ENCODE measurements at regions of chr19 and their contacts with region 1.

Region 1: DNA sequence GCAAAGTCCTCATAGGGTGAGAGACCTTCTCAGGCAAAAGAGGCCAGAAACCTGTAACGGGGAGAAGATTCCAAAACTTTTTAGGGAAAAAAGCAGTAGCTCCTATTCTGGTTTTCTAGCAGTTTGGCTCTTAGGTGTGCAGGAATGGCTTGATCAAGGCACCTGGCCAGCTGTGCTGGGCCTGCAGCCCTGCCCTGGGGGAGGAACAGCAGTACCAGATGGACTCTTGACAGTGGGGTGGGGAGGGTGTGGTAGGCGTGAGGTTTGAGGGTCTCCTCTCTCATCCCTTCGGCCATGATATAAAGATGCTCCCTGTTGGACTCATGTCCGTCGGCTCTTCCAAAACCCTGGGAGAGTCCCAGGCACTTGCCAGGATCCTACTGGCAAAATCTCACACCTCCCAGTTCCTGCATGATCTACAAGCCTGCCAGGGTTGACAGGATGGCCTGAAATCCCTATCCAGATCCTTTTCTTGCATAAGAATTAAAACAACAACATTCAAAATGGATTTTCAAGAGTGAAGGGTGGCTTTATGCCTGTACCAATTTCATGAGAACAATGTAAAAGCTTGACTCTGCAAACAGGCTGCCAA is 120.4 kb downstream of the IER2 start:
- DNase-seq: no peak
- ATAC-seq: no peak
- H3K4me3 Mint-ChIP-seq: no peak overlapping the region
- H3K27ac Mint-ChIP-seq: no peak overlapping the region
- H3K4me1 Mint-ChIP-seq: peaks cover 2% of the 10 kb centered on the region
- H3K27me3 Mint-ChIP-seq: no peaks in the 10 kb centered on the region
- CTCF ChIP-seq: no peak

Region 2: GRCh38 chr19:13430790-13431582 is 160.4 kb after region 1 on chr19:
- CTCF ChIA-PET with region 1: no interaction called
- POLR2A ChIA-PET with region 1: interaction called, 12 read pairs
- intact Hi-C with region 1: no loop called
- DNase-seq: peak; percentile 22
- ATAC-seq: peak; percentile 67
- H3K4me3 Mint-ChIP-seq: no peak overlapping the region
- H3K27ac Mint-ChIP-seq: no peak overlapping the region
- H3K4me1 Mint-ChIP-seq: no peaks in the 10 kb centered on the region
- H3K27me3 Mint-ChIP-seq: peaks cover 24% of the 10 kb centered on the region
- CTCF ChIP-seq: no peak

Region 3: GRCh38 chr19:14114854-14115253 is 844.2 kb after region 1 on chr19:
- CTCF ChIA-PET with region 1: no interaction called
- POLR2A ChIA-PET with region 1: no interaction called
- intact Hi-C with region 1: no loop called
- DNase-seq: peak; percentile 48
- ATAC-seq: no peak
- H3K4me3 Mint-ChIP-seq: peak overlapping the region; percentile 55
- H3K27ac Mint-ChIP-seq: peak overlapping the region; percentile 46
- H3K4me1 Mint-ChIP-seq: peaks cover 42% of the 10 kb centered on the region
- H3K27me3 Mint-ChIP-seq: no peaks in the 10 kb centered on the region
- CTCF ChIP-seq: no peak

Measured in activated B cell treated with CpG ODN at 0.5 μM for 24 hours (primary cell).